Adrenal gland (tissue), 19 donors: ENCODE measurements at regions of chr19 and their contacts with region 1.

Region 1: DNA sequence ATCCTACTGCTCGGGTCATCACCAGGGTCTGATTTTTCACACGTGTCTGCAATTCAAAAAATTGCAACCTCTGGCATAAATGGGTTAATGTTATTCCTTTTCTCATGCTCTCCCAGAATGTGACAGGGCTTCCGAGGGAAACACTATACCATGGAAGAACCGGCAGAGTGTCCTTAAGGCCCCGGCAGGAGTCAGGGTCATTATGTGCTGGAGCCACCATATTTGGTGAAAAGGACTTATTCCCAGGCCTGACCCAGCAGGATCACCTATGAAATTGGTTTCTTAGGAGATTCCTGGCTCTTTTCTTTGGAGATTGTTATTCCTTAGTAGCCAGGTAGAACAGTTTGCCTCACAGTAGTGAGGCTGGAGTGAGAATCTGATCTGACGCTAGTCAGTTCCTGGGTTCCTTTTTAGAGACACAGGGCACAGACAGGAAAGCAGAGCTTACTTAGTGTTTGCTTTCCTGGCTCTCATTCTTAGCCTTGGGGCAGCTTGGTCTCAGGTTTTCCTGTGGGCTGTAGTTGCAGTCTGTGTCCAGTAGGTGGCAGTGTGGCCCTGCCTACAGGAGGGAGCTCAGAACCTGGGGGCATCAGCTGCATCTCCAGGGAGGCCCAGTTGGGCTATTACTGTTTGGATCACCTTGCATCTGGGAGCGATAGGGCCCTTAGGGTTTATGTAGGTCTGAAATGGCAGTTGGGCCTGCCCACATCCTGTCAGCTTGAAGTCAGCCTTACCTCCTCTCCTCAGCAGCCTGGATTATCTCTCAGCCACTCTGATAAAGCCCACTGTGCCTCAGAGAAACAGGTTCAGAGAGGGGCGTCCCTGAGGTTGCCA is 12.4 kb downstream of the SNRNP70 start:
- DNase-seq: peak; percentile 58 to 89 (median 74)
- H3K4me3 ChIP-seq: no peak overlapping the region
- H3K27ac ChIP-seq: peak overlapping the region in 2 of 5 donors; percentile 12 to 32
- H3K4me1 ChIP-seq: peaks cover 0 to 9% of the 10 kb centered on the region in 2 donors
- H3K27me3 ChIP-seq: no peaks in the 10 kb centered on the region
- CTCF ChIP-seq: peak; percentile 96 to 99 (median 98)
- POLR2A ChIP-seq: no peak

Region 2: GRCh38 chr19:49205114-49205513 is 107.4 kb after region 1 on chr19:
- intact Hi-C with region 1: loop called (anchors 5 kb)
- DNase-seq: no peak
- H3K4me3 ChIP-seq: no peak overlapping the region
- H3K27ac ChIP-seq: no peak overlapping the region
- H3K4me1 ChIP-seq: peaks cover 0 to 8% of the 10 kb centered on the region in 2 donors
- H3K27me3 ChIP-seq: no peaks in the 10 kb centered on the region
- CTCF ChIP-seq: no peak
- POLR2A ChIP-seq: no peak